ENCODE measurements at regions of chr12 and their contacts with region 1.

Region 1: DNA sequence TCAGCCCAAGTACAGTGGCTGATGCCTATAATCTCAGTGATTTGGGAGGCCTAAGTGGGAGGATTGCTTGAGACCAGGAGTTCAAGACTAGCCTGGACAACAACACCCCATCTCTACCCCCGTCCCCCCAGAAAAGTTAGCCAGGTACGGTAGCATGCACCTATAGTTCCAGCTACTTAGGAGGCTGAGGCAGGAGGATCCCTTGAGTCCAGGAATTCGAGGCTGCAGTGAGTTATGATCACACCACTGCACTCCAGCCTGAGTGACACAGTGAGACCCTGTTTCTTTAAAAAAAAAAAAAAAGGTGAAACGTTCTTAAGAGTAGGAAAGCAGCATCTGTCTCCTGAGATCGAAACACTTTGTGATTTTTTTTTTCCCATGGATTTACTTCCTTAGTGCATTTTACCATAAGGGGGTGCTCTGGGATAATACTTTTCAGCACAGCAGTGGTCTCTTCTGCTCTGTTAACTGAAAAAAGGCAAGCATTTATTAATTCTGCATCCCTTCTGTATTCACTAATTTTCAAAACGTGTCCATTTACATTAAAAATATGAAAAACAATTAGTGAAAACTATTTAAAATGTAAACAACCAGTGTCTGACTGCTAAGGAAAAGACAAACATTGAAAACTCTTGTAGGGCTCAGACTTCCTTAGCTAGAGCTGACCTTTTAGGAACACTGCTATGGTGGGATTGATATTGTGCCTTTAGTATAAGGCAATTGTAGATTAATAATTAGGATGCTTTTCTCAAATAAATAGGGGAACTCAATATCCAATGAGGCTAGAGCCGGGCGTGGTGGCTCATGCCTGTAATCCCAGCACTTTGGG is 31.2 kb upstream of the USP44 start:
- DNase-seq: peak; percentile 77
- ATAC-seq: peak; percentile 88
- H3K4me3 ChIP-seq: no peak overlapping the region
- H3K27ac ChIP-seq: no peak overlapping the region
- H3K4me1 ChIP-seq: peaks cover 3% of the 10 kb centered on the region
- H3K27me3 ChIP-seq: no peaks in the 10 kb centered on the region
- CTCF ChIP-seq: peak; percentile 85
- POLR2A ChIP-seq: no peak
- RAD21 ChIP-seq: peak; percentile 89

Region 2: DNA sequence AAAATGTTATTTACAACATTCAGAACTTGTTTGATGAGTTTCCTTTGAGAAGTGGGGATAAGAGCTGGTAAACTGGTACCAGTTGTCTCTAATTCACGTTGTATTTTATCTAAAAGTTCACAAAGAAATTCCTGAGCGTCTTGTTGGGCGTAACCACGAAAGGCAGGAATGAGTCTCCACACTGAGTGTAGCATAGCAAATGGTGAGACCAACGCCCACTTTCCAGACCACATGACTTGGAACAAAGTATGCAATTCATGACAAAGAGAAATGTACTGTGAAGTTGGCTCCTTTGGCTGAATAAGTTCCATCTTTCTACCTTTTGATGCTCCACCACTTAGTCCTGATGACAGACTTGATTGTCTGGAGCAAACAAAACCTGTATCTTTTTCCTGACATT is 49.6 kb before region 1 on chr12:
- CTCF ChIA-PET with region 1: no interaction called
- POLR2A ChIA-PET with region 1: no interaction called
- dilution Hi-C with region 1: no loop called
- in situ Hi-C with region 1: no loop called
- intact Hi-C with region 1: no loop called
- DNase-seq: peak; percentile 53
- ATAC-seq: no peak
- H3K4me3 ChIP-seq: no peak overlapping the region
- H3K27ac ChIP-seq: peak overlapping the region; percentile 55; the same call in 1 of the 2 replicates
- H3K4me1 ChIP-seq: peaks cover 15% of the 10 kb centered on the region
- H3K27me3 ChIP-seq: no peaks in the 10 kb centered on the region
- CTCF ChIP-seq: no peak
- POLR2A ChIP-seq: no peak
- RAD21 ChIP-seq: no peak

Region 3: GRCh38 chr12:95623585-95624042 is 41.2 kb after region 1 on chr12:
- CTCF ChIA-PET with region 1: interaction called, 7 read pairs
- POLR2A ChIA-PET with region 1: no interaction called
- dilution Hi-C with region 1: no loop called
- in situ Hi-C with region 1: no loop called
- intact Hi-C with region 1: loop called (anchors 5 kb)
- DNase-seq: peak; percentile 89
- ATAC-seq: peak; percentile 95
- H3K4me3 ChIP-seq: no peak overlapping the region
- H3K27ac ChIP-seq: peak overlapping the region; percentile 31; the same call in 1 of the 2 replicates
- H3K4me1 ChIP-seq: peaks cover 3% of the 10 kb centered on the region
- H3K27me3 ChIP-seq: no peaks in the 10 kb centered on the region
- CTCF ChIP-seq: peak; percentile 77
- POLR2A ChIP-seq: no peak
- RAD21 ChIP-seq: peak; percentile 73

Region 4: GRCh38 chr12:95733141-95733825 is 150.8 kb after region 1 on chr12:
- CTCF ChIA-PET with region 1: no interaction called
- POLR2A ChIA-PET with region 1: no interaction called
- dilution Hi-C with region 1: no loop called
- in situ Hi-C with region 1: no loop called
- intact Hi-C with region 1: loop called (anchors 10 kb)
- DNase-seq: peak; percentile 95
- ATAC-seq: peak; percentile 88
- H3K4me3 ChIP-seq: no peak overlapping the region
- H3K27ac ChIP-seq: peak overlapping the region; percentile 46; the same call in 1 of the 2 replicates
- H3K4me1 ChIP-seq: peaks cover 10% of the 10 kb centered on the region; the same call in 1 of the 2 replicates
- H3K27me3 ChIP-seq: no peaks in the 10 kb centered on the region
- CTCF ChIP-seq: no peak
- POLR2A ChIP-seq: no peak
- RAD21 ChIP-seq: no peak

Region 5: GRCh38 chr12:95763809-95764253 is 181.4 kb after region 1 on chr12:
- CTCF ChIA-PET with region 1: no interaction called
- POLR2A ChIA-PET with region 1: no interaction called
- dilution Hi-C with region 1: no loop called
- in situ Hi-C with region 1: no loop called
- intact Hi-C with region 1: no loop called
- DNase-seq: peak; percentile 88
- ATAC-seq: peak; percentile 75
- H3K4me3 ChIP-seq: no peak overlapping the region
- H3K27ac ChIP-seq: no peak overlapping the region
- H3K4me1 ChIP-seq: peaks cover 11% of the 10 kb centered on the region
- H3K27me3 ChIP-seq: no peaks in the 10 kb centered on the region
- CTCF ChIP-seq: no peak
- POLR2A ChIP-seq: no peak
- RAD21 ChIP-seq: no peak

Region 6: GRCh38 chr12:95820102-95820703 is 237.8 kb after region 1 on chr12:
- CTCF ChIA-PET with region 1: interaction called, 3 read pairs
- POLR2A ChIA-PET with region 1: no interaction called
- dilution Hi-C with region 1: no loop called
- in situ Hi-C with region 1: loop called (anchors 5 kb)
- intact Hi-C with region 1: loop called (anchors 1 kb)
- DNase-seq: peak; percentile 62
- ATAC-seq: peak; percentile 42; the same call in 1 of the 2 replicates
- H3K4me3 ChIP-seq: no peak overlapping the region
- H3K27ac ChIP-seq: no peak overlapping the region
- H3K4me1 ChIP-seq: no peaks in the 10 kb centered on the region
- H3K27me3 ChIP-seq: no peaks in the 10 kb centered on the region; the same call in 1 of the 2 replicates
- CTCF ChIP-seq: peak; percentile 61
- POLR2A ChIP-seq: no peak
- RAD21 ChIP-seq: peak; percentile 43

Region 7: GRCh38 chr12:95848575-95849388 is 266.3 kb after region 1 on chr12:
- CTCF ChIA-PET with region 1: interaction called, 4 read pairs
- POLR2A ChIA-PET with region 1: no interaction called
- dilution Hi-C with region 1: no loop called
- in situ Hi-C with region 1: no loop called
- intact Hi-C with region 1: loop called (anchors 1 kb)
- DNase-seq: peak; percentile 48
- ATAC-seq: peak; percentile 89
- H3K4me3 ChIP-seq: no peak overlapping the region
- H3K27ac ChIP-seq: no peak overlapping the region
- H3K4me1 ChIP-seq: no peaks in the 10 kb centered on the region
- H3K27me3 ChIP-seq: peaks cover 9% of the 10 kb centered on the region
- CTCF ChIP-seq: peak; percentile 50
- POLR2A ChIP-seq: no peak
- RAD21 ChIP-seq: peak; percentile 64

Region 8: DNA sequence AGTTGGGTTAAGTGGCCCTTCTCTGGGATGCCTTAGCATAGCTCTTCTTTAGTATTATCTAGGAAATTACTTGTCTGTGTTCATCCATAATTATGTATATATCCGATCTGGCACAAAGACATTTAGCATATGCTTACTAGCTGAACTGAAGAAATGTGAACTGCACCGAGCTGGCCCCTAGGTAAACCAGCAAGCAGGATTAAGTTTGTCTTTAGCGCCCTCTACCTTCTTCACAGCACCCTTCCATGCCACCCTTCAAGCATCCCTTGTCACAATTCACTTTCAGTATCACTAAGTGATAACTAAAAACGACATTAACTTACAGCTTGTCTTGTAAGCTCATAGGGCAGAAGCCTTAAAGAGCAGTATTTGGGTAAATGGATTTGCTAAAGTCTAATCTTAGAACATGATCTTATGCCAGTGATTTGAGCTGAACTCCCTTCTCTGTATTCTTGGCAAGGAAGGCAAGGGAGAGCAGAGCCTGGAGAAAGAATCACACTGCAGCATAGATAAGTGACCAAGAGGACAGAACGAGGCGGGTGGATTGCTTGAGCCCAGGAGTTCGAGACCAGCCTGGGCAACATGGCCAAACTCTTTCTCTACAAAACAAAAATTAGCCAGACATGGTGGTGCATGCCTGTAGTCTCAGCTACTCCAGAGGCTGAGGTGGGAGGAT is 416.3 kb after region 1 on chr12:
- CTCF ChIA-PET with region 1: interaction called, 4 read pairs
- POLR2A ChIA-PET with region 1: no interaction called
- dilution Hi-C with region 1: no loop called
- in situ Hi-C with region 1: no loop called
- intact Hi-C with region 1: loop called (anchors 2 kb)
- DNase-seq: peak; percentile 61
- ATAC-seq: peak; percentile 94
- H3K4me3 ChIP-seq: no peak overlapping the region
- H3K27ac ChIP-seq: no peak overlapping the region
- H3K4me1 ChIP-seq: no peaks in the 10 kb centered on the region
- H3K27me3 ChIP-seq: no peaks in the 10 kb centered on the region
- CTCF ChIP-seq: peak; percentile 63
- POLR2A ChIP-seq: no peak
- RAD21 ChIP-seq: peak; percentile 65

Measured in IMR-90 (cell line).